ENCODE measurements at regions of chr9 and their contacts with region 1.

Region 1: GRCh38 chr9:237858-238345 is 23.2 kb downstream of the DOCK8 start:
- DNase-seq: no peak
- ATAC-seq: peak; percentile 51
- H3K4me3 Mint-ChIP-seq: peak overlapping the region; percentile 51
- H3K27ac Mint-ChIP-seq: peak overlapping the region; percentile 85
- H3K4me1 Mint-ChIP-seq: peaks cover 68% of the 10 kb centered on the region
- H3K27me3 Mint-ChIP-seq: no peaks in the 10 kb centered on the region

Region 2: DNA sequence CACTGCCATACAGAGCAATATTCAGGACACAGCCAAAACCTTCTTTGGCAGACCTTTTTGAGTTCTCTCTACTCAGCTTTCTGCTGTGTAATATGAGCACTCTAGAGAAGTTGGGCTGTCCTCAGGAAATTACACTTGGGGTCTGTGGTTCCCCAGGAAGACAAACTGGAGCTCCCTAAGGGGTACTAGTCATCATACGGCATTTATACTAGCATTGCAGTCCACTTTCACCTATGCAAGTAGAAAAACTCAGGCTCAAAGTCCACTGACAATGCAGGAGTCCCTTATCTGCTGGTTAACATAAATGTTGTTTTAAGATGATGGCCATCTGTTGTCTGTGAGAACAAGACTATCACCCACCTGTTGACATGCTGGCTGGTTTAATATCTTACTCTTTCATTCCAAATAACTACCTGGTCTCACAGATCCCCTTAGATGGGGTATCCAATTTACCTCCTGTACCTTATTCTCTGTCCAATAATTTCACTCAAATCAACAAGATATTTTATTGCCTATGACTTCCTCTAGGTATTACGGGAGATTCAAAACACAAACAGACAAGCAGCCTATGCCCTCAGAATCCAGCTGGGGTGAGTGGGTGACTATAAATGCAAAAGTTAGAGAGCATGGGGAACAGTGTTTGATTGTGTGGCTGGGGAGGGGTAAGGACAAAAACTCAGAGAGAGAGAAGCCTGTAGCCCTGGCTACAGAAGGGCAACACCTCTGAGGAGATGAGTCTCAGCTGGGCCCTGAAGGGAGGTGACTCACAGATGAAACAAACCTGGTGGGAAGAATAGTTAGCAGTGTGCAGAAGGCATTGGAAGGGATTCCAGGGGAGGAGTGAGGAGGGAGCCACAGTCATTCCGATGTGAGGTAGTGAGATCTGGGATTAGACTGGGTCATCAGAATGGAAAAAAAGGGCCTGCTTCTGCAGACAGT is 13.1 kb before region 1 on chr9:
- CTCF ChIA-PET with region 1: interaction called, 25 read pairs
- DNase-seq: peak; percentile 74
- ATAC-seq: peak; percentile 58
- H3K4me3 Mint-ChIP-seq: no peak overlapping the region
- H3K27ac Mint-ChIP-seq: no peak overlapping the region
- H3K4me1 Mint-ChIP-seq: peaks cover 48% of the 10 kb centered on the region
- H3K27me3 Mint-ChIP-seq: no peaks in the 10 kb centered on the region